Cardiac septum (tissue), 1 donor: ENCODE measurements at regions of chr1 and their contacts with region 1.

Region 1: DNA sequence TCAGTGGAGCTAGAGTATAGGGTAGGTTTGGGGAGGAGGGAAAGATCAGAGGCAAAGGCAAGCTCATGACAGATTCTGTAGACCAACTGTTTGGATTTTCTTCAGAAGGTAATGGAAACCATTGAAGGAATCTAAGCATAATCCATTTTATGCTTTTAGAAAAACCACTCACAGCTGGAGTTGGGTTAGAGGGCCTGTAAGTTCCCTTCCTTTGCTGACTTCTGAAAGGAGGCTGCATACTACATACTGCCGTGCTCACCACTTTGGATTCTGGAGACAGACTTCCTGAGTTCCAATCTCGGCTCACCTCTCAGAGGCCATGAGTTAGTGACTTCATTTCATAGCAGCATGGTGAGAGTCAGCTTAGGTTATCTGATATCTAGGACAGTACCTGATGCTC is 6.4 kb upstream of the SYT2 start:
- DNase-seq: no peak

Region 2: GRCh38 chr1:202184750-202185460 is 531.7 kb before region 1 on chr1:
- intact Hi-C with region 1: loop called (anchors 5 kb)
- DNase-seq: peak; percentile 85

Region 3: GRCh38 chr1:202728951-202729350 is 12.3 kb after region 1 on chr1:
- intact Hi-C with region 1: no loop called
- DNase-seq: no peak